H1 (cell line): ENCODE measurements at regions of chr12 and their contacts with region 1.

Region 1: GRCh38 chr12:56041552-56042429 is at the start of gene RPS26:
- DNase-seq: peak; percentile 89 to 99
- H3K4me3 ChIP-seq: peak within 1 kb of the TSS; percentile 73 to 95 (median 86)
- H3K27ac ChIP-seq: peak within 1 kb of the TSS; percentile 98
- H3K4me1 ChIP-seq: peaks cover 0 to 12% (median 4%) of the 10 kb centered on the region in 4 experiments; a peak in 5 of 7 replicates
- H3K27me3 ChIP-seq: no peaks in the 10 kb centered on the region
- CTCF ChIP-seq: peak; percentile 43 to 56 (median 55)
- EP300 ChIP-seq: no peak
- POLR2A ChIP-seq: peak; percentile 98 to 99
- RAD21 ChIP-seq: peak; percentile 63 to 69
- total RNA-seq, gene RPS26: 53.4 and 64.3 TPM in 2 replicates

Region 2: GRCh38 chr12:55829967-55830600 is 211.7 kb before region 1 on chr12:
- CTCF ChIA-PET with region 1: interaction called, 4 read pairs
- POLR2A ChIA-PET with region 1: interaction called, 11 read pairs
- DNase-seq: peak in 1 of 2 experiments; percentile 84
- H3K4me3 ChIP-seq: peak overlapping the region; percentile 59 to 97 (median 86)
- H3K27ac ChIP-seq: peak overlapping the region; percentile 92
- H3K4me1 ChIP-seq: peaks cover 1 to 16% (median 6%) of the 10 kb centered on the region in 4 experiments
- H3K27me3 ChIP-seq: no peaks in the 10 kb centered on the region
- CTCF ChIP-seq: 0 out of 4 replicates have a peak, but pooled peaks of 1 of the 3 experiments have one; percentile 2
- EP300 ChIP-seq: no peak
- POLR2A ChIP-seq: peak in 1 of 2 experiments; percentile 53; a peak in 1 of 3 replicates
- RAD21 ChIP-seq: peak in 1 of 2 experiments; percentile 39; a peak in 2 of 4 replicates

Region 3: GRCh38 chr12:55973598-55974307 is 68.0 kb before region 1 on chr12 and contains the start of gene RAB5B:
- CTCF ChIA-PET with region 1: no interaction called
- POLR2A ChIA-PET with region 1: interaction called, 16 read pairs
- DNase-seq: peak; percentile 94 to 100
- H3K4me3 ChIP-seq: peak within 1 kb of the TSS; percentile 65 to 93 (median 88)
- H3K27ac ChIP-seq: peak within 1 kb of the TSS; percentile 12; the same call in 1 of the 2 replicates
- H3K4me1 ChIP-seq: peaks cover 0 to 4% (median 1%) of the 10 kb centered on the region in 4 experiments; a peak in 4 of 7 replicates
- H3K27me3 ChIP-seq: no peaks in the 10 kb centered on the region
- CTCF ChIP-seq: no peak
- EP300 ChIP-seq: no peak
- POLR2A ChIP-seq: peak; percentile 88 to 93
- RAD21 ChIP-seq: no peak
- total RNA-seq, gene RAB5B: 56.7 and 65.6 TPM in 2 replicates

Region 4: DNA sequence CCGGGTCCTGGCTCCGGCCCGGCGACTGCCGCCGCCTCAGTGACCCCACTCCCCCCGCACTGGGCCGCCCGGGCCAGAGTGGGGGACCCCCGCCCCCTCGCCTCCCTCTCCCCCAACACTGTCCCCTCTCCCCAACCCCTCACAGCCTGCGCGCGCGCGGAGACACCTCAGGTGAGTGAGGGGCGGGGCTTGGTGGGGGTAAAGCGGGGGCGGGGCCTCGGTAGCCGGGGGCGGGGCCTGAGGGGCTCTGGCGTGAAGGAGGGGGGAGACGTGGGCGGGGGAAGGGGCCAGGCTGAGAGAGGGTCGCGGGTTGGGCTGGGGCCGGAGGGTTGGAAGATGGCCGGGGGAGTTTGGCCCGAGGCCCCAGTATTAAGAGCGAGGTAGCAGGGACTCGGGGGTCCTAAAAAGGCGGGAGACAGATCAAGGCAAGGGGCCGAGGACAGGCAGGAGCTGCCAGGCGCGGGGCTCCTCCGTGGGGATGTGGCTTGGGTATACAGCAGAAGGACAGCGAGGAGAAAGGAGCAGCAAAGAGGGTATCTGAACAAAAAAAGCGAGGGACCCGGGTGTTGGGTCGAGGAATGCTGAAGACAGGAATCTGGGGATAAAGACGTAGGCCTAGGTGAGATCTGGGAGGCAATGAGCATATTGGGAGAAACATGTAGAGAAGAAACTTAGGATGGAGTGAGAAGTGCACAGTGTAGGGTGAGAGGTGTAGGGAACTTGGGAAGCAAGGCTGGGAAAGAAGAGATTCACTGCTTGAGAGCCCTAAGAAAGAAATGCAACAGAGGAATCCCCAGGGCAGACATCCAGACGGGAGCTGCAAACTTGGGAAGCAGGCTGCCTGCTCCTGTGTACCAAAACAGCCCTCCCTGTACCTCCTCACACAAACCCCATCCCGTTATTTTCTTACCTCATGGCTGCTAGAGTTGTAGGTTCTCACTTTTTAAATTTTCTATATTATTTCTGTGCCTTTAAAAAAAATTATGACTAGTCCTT is 33.9 kb before region 1 on chr12:
- CTCF ChIA-PET with region 1: interaction called, 3 read pairs
- POLR2A ChIA-PET with region 1: interaction called, 25 read pairs
- DNase-seq: peak in 1 of 2 experiments; percentile 94
- H3K4me3 ChIP-seq: peak overlapping the region; percentile 52 to 90 (median 83)
- H3K27ac ChIP-seq: peak overlapping the region; percentile 62
- H3K4me1 ChIP-seq: peaks cover 0 to 4% (median 2%) of the 10 kb centered on the region in 4 experiments; a peak in 3 of 7 replicates
- H3K27me3 ChIP-seq: no peaks in the 10 kb centered on the region
- CTCF ChIP-seq: no peak
- EP300 ChIP-seq: no peak
- POLR2A ChIP-seq: peak; percentile 63
- RAD21 ChIP-seq: no peak

Region 5: GRCh38 chr12:56029666-56030293 is 12.0 kb before region 1 on chr12:
- CTCF ChIA-PET with region 1: interaction called, 12 read pairs
- POLR2A ChIA-PET with region 1: interaction called, 11 read pairs
- DNase-seq: peak in 1 of 2 experiments; percentile 52
- H3K4me3 ChIP-seq: no peak overlapping the region
- H3K27ac ChIP-seq: no peak overlapping the region
- H3K4me1 ChIP-seq: no peaks in the 10 kb centered on the region
- H3K27me3 ChIP-seq: no peaks in the 10 kb centered on the region
- CTCF ChIP-seq: peak; percentile 37 to 74 (median 66)
- EP300 ChIP-seq: no peak
- POLR2A ChIP-seq: no peak
- RAD21 ChIP-seq: peak; percentile 59 to 68

Region 6: DNA sequence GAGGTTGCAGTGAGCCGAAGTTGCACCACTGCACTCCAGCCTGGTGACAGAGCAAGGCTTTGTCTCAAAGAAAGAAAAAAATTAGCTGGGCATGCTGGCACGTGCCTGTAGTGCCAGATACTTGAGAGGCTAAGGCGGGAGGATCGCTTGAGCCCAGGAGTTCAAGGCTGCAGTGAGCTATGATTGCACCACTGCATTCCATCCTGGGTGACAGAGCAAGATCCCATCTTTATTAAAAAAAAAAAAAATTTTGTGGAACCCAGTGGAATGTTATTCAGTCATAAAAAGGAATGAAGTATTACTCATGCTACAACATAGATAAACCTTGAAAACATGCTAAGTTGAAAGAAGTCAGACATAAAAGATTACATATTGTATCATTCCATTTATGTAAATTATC is 29.9 kb after region 1 on chr12:
- CTCF ChIA-PET with region 1: interaction called, 11 read pairs
- POLR2A ChIA-PET with region 1: interaction called, 11 read pairs
- DNase-seq: no peak
- H3K4me3 ChIP-seq: no peak overlapping the region
- H3K27ac ChIP-seq: no peak overlapping the region
- H3K4me1 ChIP-seq: no peaks in the 10 kb centered on the region
- H3K27me3 ChIP-seq: no peaks in the 10 kb centered on the region
- CTCF ChIP-seq: no peak
- EP300 ChIP-seq: no peak
- POLR2A ChIP-seq: no peak
- RAD21 ChIP-seq: no peak

Region 7: GRCh38 chr12:56084958-56085543 is 43.3 kb after region 1 on chr12:
- CTCF ChIA-PET with region 1: interaction called, 8 read pairs
- POLR2A ChIA-PET with region 1: interaction called, 73 read pairs
- DNase-seq: peak in 1 of 2 experiments; percentile 75
- H3K4me3 ChIP-seq: no peak overlapping the region
- H3K27ac ChIP-seq: no peak overlapping the region
- H3K4me1 ChIP-seq: peaks cover 3 to 13% (median 10%) of the 10 kb centered on the region in 4 experiments
- H3K27me3 ChIP-seq: no peaks in the 10 kb centered on the region
- CTCF ChIP-seq: peak; percentile 73 to 80 (median 75)
- EP300 ChIP-seq: no peak
- POLR2A ChIP-seq: no peak
- RAD21 ChIP-seq: peak; percentile 43 to 59

Region 8: GRCh38 chr12:56387152-56387736 is 345.5 kb after region 1 on chr12:
- CTCF ChIA-PET with region 1: no interaction called
- POLR2A ChIA-PET with region 1: no interaction called
- DNase-seq: no peak
- H3K4me3 ChIP-seq: no peak overlapping the region
- H3K27ac ChIP-seq: no peak overlapping the region
- H3K4me1 ChIP-seq: peaks cover 0 to 3% (median 0%) of the 10 kb centered on the region in 4 experiments; a peak in 1 of 7 replicates
- H3K27me3 ChIP-seq: no peaks in the 10 kb centered on the region
- CTCF ChIP-seq: no peak
- EP300 ChIP-seq: no peak
- POLR2A ChIP-seq: no peak
- RAD21 ChIP-seq: no peak